ENCODE measurements at regions of chr10 and their contacts with region 1.

Region 1: GRCh38 chr10:14878266-14879054 is at the start of gene SUV39H2:
- DNase-seq: peak; percentile 86 to 97
- H3K4me3 ChIP-seq: peak within 1 kb of the TSS; percentile 79 to 92
- H3K27ac ChIP-seq: peak within 1 kb of the TSS; percentile 85 to 92
- H3K4me1 ChIP-seq: peaks cover 0 to 4% of the 10 kb centered on the region in 2 donors
- H3K27me3 ChIP-seq: no peaks in the 10 kb centered on the region
- CTCF ChIP-seq: no peak
- total RNA-seq, gene SUV39H2: not detected

Region 2: DNA sequence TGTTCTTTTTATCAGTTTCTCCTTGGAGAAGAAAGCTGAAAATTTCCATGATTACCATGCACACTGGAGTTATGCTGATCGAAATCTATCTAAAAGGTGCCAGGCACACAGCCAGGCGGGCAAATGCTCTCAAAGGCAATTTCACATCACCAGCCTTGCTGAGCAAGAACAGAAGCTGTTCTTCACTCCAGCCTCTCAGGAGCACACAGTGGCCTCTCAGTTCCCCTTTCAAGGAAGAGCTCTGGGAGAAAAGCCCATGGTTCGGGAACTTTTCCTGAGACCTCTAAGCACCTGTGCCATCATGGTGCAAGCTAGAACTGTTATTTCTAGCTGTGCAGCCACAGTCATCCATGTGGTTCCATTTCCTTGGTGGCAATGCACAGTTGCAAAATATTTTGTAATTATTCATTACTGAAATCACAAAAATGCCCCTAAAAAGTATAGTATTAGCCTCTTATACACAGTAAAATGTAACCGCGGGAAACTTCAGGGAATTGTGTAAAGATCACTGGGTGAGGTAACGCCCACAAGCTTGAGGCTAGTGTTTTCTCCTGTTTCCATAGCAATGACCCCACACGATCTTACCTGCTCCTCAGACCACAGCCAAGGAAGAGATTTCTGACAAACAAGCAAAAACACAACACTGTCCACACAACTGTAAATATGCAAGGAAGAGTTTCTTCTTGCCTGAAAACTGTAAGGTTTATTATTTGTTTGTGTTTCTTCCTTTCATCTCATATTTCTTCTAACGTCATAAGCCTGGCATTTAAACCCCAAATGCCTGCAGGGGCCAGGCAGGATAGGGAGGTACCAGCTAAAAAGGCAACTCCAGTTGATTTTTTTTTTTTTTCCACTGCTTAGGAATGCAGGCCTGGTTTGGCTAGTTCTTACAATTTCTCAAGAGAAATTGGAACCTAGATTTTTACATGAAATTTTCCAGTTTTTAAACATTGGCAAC is 224.9 kb before region 1 on chr10:
- intact Hi-C with region 1: loop called (anchors 1 kb)
- DNase-seq: no peak
- H3K4me3 ChIP-seq: peak overlapping the region in 1 of 2 donors; percentile 7
- H3K27ac ChIP-seq: peak overlapping the region; percentile 67 to 80
- H3K4me1 ChIP-seq: peaks cover 8 to 17% of the 10 kb centered on the region in 2 donors
- H3K27me3 ChIP-seq: no peaks in the 10 kb centered on the region
- CTCF ChIP-seq: no peak

Region 3: GRCh38 chr10:14798636-14799035 is 79.8 kb before region 1 on chr10:
- intact Hi-C with region 1: no loop called
- DNase-seq: no peak
- H3K4me3 ChIP-seq: no peak overlapping the region
- H3K27ac ChIP-seq: no peak overlapping the region
- H3K4me1 ChIP-seq: no peaks in the 10 kb centered on the region
- H3K27me3 ChIP-seq: no peaks in the 10 kb centered on the region
- CTCF ChIP-seq: no peak

Region 4: GRCh38 chr10:14954001-14954770 is 75.7 kb after region 1 on chr10 and contains the start of gene DCLRE1C:
- intact Hi-C with region 1: loop called (anchors 1 kb)
- DNase-seq: peak; percentile 53 to 94
- H3K4me3 ChIP-seq: peak within 1 kb of the TSS; percentile 87 to 92
- H3K27ac ChIP-seq: peak within 1 kb of the TSS; percentile 89 to 91
- H3K4me1 ChIP-seq: peaks cover 4 to 11% of the 10 kb centered on the region in 2 donors
- H3K27me3 ChIP-seq: no peaks in the 10 kb centered on the region
- CTCF ChIP-seq: no peak
- total RNA-seq, gene DCLRE1C: 8.6 TPM

Region 5: DNA sequence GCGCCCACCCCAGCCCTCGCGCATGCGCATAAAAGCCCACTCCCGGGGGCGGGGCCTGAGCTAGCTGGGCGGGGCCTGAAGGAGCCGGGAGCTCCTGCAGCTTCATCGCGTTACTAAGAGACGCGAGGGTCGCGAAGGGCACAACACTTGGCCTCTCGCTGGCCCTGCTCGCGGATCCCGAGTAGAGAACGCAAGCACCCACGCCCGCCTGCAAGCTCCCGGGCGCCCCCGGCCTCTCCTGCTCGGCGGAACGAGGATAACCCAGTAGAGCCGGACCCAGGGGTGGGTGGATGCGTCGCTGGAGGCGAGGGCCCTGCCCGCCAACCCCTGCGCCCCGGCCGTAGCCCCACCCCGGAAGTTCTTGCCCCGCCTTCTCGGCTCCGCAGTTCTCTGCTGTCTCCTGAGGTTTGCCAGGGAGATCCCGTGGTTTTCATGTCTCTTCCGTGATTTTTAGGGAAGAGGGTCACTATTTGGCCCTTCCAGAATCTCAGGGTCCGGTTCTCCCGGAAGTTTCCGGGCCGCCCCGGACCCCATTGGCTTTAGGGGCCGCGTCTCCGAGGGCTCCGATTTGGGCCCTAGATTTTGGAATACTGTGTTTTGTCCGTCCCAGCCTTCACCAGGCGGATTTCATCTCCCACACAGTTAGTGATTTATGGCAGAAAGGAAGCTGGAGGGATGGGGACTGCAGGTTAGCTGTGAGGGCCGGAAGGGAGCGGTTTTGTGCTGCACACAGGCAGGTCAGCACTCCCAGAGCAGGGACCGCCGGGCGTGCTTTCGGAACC is 81.0 kb after region 1 on chr10 and contains the start of gene MEIG1:
- intact Hi-C with region 1: loop called (anchors 1 kb)
- DNase-seq: peak; percentile 76 to 97
- H3K4me3 ChIP-seq: peak within 1 kb of the TSS; percentile 76 to 92
- H3K27ac ChIP-seq: peak within 1 kb of the TSS; percentile 92 to 97
- H3K4me1 ChIP-seq: peaks cover 0 to 3% of the 10 kb centered on the region in 2 donors
- H3K27me3 ChIP-seq: no peaks in the 10 kb centered on the region
- CTCF ChIP-seq: no peak
- total RNA-seq, gene MEIG1: not detected

Region 6: DNA sequence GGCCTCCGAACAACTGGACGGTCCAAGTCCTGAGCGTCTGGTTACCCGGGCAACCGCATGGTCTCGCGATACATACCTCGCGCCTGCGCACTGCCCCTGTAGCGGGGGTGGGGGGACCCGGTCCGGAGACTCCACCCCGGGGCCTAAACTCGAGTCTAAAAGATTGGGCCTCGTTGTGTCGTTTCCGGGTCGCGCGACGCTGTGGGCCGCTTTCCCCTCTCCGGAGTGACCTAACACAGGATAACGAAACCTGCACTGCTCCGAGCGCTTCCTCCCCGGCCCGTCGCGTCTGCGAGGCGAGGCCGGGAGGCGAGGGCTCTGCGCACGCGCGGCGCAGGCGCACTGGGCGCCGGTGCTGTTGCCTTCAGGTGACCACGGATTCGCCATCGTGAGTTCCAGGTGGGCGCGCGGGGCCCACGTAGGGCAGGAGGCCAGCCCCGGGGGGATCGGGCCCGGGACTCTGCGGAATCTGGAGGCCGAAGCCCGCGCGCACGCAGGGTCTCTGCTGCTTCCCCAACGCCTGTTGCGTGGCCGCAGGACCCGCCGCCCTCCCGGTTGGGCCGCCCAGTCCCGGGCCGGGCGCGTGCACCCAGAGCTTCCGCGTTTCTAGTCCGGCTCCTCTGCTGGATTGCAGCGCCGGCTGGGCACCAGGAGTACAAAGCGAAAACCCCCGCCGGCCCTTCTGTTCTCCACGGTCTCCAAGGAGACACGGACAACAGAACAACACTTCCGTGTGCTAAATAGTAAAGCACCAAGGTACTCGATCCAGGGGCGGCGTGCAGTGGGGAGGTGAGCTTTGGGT is 218.8 kb after region 1 on chr10 and contains the start of gene RPP38:
- intact Hi-C with region 1: loop called (anchors 2 kb)
- DNase-seq: peak; percentile 78 to 97
- H3K4me3 ChIP-seq: peak within 1 kb of the TSS; percentile 72 to 97
- H3K27ac ChIP-seq: peak within 1 kb of the TSS; percentile 85 to 97
- H3K4me1 ChIP-seq: peaks cover 6 to 22% of the 10 kb centered on the region in 2 donors
- H3K27me3 ChIP-seq: no peaks in the 10 kb centered on the region
- CTCF ChIP-seq: no peak
- total RNA-seq, gene RPP38: not detected